CD8-positive, alpha-beta T cell (primary cell): ENCODE measurements at regions of chr11 and their contacts with region 1.

Region 1: DNA sequence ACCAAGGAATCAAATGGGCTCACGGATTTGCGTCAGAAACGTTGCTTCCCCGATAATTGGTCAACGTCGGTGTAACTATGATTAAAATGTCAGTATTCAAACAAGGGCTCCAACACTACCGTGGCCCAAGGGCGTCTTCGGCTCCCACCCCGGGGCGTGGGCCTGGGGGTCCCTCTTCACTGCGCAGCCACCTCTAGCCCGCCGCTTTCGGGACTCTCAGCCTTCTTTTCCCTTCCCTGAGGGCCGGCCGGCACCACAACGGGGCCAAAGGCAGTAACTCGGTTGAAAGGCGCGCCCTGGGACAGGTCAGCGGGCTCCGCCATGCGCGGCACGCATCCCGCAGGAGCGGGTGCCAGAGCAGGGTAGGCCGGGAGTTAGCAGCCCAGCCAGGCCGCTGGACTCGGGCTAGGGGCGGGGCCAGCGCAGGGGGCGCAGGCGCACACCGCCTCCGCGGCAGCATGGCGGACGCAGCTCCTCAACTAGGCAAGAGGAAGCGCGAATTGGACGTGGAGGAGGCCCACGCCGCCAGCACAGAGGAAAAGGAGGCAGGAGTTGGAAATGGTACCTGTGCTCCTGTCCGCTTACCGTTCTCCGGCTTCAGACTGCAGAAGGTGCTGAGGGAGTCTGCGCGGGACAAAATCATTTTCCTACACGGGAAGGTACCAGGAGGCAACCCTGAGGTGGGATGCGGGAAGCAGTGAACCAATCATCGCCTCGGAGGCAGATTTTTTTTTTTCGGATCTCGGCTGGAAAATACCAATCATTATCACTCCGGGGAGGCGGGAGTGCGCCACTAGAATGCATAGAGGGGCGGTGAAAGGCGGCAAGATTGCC is at the start of gene DCPS:
- DNase-seq: peak; percentile 66 to 92 (median 84)
- ATAC-seq: peak; percentile 96
- H3K4me3 ChIP-seq: peak within 1 kb of the TSS; percentile 93 to 97
- H3K4me3 Mint-ChIP-seq: peak within 1 kb of the TSS; percentile 88
- H3K27ac ChIP-seq: peak within 1 kb of the TSS; percentile 92 to 94
- H3K27ac Mint-ChIP-seq: peak within 1 kb of the TSS; percentile 89
- H3K4me1 ChIP-seq: peaks cover 21% of the 10 kb centered on the region
- H3K4me1 Mint-ChIP-seq: peaks cover 35% of the 10 kb centered on the region
- H3K27me3 ChIP-seq: no peaks in the 10 kb centered on the region
- H3K27me3 Mint-ChIP-seq: no peaks in the 10 kb centered on the region
- CTCF ChIP-seq: no peak
- total RNA-seq, gene DCPS: 7.3 to 7.5 TPM

Region 2: DNA sequence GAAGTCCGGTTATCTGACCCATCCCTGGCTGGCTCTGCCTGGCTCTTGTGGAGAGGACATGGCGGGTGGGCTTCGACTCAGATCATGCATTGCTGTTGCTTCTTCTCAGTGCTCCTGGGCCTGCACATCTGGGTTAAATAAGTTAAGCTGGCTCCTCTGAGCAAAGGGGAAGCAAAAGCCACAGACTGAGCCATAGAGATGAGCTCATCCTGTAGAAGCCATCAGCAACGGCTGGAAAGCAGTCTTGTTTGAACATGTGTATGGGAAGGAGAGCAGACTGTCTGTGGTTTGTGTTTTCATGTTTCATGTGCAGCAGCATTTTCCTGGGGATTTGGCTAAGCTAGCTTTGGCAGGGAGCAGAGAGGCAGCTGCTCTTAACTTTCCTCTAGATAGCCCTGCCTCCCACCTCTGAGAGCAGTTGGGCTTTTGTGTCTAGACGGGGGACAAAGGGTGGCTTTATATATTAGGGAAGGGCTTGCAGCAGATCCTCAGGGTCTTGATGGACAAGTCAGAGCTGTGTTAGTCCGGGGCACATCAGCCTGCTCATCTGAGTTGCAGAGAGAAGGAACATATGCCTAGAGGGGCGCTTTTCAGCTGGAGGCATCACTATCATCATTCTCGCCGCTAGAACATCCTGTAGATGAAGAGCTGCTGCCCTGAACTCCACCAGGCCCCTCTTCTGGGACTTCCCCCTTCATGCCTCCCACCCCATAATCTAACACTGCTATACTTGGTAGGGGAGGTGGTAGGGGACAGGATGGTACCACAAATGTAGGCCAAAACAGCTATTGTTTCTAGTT is 14.9 kb after region 1 on chr11:
- CTCF ChIA-PET with region 1: interaction called, 10 read pairs
- POLR2A ChIA-PET with region 1: interaction called, 11 read pairs
- intact Hi-C with region 1: no loop called
- DNase-seq: peak in 4 of 9 experiments; percentile 27 to 69 (median 44)
- ATAC-seq: peak; percentile 76
- H3K4me3 ChIP-seq: peak overlapping the region in 1 of 2 experiments; percentile 14
- H3K4me3 Mint-ChIP-seq: peak overlapping the region; percentile 49
- H3K27ac ChIP-seq: peak overlapping the region; percentile 8 to 74
- H3K27ac Mint-ChIP-seq: peak overlapping the region; percentile 76
- H3K4me1 ChIP-seq: peaks cover 30% of the 10 kb centered on the region
- H3K4me1 Mint-ChIP-seq: peaks cover 33% of the 10 kb centered on the region
- H3K27me3 ChIP-seq: no peaks in the 10 kb centered on the region
- H3K27me3 Mint-ChIP-seq: no peaks in the 10 kb centered on the region
- CTCF ChIP-seq: no peak